Dorsolateral prefrontal cortex (tissue), 120 donors: ENCODE measurements at regions of chr12 and their contacts with region 1.

Region 1: GRCh38 chr12:23204933-23205778 is 580.2 kb downstream of the ETNK1 start:
- DNase-seq: no peak
- H3K4me3 ChIP-seq: no peak overlapping the region
- H3K27ac ChIP-seq: no peak overlapping the region
- H3K27me3 ChIP-seq: peaks cover 0 to 4% (median 0%) of the 10 kb centered on the region in 45 donors
- CTCF ChIP-seq: peak; percentile 77 to 98 (median 92)

Region 2: DNA sequence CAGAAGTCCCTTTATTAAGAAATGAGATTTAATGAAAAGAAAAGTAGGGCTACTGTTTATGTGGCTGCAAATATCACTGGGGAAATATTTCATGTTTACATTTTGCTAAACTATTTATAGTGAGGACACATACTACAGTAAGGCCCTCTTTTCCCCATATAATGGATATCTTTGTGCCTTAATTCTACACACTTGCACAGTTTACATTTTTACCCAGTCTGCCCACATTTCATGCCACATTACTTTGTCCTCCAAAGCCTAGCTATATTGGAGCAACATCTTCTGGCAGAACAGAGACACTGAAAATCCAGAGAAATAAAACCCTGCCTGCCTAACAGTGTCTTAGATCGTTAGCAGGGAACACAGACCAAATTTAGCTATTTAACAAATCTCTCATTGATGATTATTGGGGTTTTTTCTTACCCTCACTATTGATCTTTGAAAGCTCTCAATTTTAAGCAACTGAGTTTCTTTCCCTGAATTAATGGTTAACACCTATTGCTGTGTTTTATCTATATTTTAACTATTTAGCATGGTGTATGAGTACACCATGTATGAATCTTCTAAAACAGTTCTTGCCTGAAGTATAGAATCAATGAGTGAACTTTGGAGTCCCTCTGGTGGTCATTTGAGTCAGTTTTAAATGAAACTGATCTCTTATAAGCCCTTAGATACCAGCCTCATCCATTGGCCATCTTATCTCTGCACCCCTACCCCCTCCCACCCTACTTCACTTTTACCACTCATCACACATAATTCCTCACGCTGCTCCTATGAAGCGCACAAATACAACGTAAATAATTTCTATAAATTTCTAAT is 1573.5 kb after region 1 on chr12:
- intact Hi-C with region 1: loop called in 1 of 2 experiments (anchors 5 kb)
- DNase-seq: no peak
- H3K4me3 ChIP-seq: no peak overlapping the region
- H3K27ac ChIP-seq: no peak overlapping the region
- H3K27me3 ChIP-seq: peaks cover 0 to 8% (median 0%) of the 10 kb centered on the region in 45 donors
- CTCF ChIP-seq: peak in 55 of 56 donors; percentile 19 to 77 (median 58)